Activated naive CD4-positive, alpha-beta T cell treated with anti-CD3 and anti-CD28 coated beads for 36 hours (primary cell): ENCODE measurements at regions of chr1 and their contacts with region 1.

Region 1: DNA sequence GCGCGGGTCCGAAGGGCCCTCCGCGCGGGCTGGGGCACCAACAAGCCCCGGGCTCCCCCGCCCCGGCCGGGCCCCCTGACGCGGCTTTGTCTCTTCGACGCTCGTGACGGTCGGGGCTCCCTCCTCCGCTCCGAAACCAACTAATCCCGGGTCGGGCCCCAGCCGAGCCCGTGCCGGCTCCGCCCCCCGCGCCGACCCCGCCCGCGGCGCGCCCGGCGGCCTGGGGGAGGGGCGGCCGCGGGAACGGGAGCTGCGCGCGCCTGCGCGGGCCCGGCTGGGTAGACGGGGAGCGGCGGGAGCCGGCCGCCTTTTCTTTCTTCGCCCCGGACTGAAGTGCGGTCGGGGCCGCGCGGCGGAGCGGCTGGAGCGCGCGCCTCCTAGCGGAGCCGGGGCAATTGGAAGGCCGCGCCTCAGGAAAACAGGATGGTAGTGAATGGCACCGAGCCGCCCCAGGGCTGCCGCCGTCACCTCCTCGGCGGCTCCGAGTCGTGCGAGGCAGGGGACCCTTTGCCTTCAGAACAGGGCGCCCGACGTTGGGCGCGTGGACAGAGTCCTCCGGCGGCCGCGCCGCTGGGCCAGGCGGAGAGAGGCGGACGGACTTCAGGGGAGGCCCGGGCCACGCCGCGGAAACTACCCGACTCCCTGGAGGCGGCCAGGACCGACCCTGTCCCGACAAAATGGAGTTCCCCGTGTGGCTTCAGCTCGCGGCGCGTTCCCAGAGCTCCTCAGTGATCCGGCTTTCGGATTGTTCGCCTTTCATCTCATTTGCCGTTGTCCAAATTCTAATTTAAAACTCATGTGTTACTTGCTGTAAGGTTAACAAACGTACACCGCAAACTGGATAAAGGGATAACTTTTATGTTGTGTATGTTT is at the start of gene TP53BP2:
- DNase-seq: peak; percentile 85
- H3K4me3 Mint-ChIP-seq: peak within 1 kb of the TSS; percentile 93
- H3K27ac Mint-ChIP-seq: peak within 1 kb of the TSS; percentile 97
- H3K4me1 Mint-ChIP-seq: peaks cover 41% of the 10 kb centered on the region
- H3K27me3 Mint-ChIP-seq: no peaks in the 10 kb centered on the region
- total RNA-seq, gene TP53BP2: 40.8 to 44.2 TPM

Region 2: GRCh38 chr1:221994274-221994698 is 1851.8 kb before region 1 on chr1:
- CTCF ChIA-PET with region 1: no interaction called
- intact Hi-C with region 1: loop called (anchors 10 kb)
- DNase-seq: peak; percentile 55
- H3K4me3 Mint-ChIP-seq: no peak overlapping the region
- H3K27ac Mint-ChIP-seq: peak overlapping the region; percentile 94
- H3K4me1 Mint-ChIP-seq: peaks cover 33% of the 10 kb centered on the region
- H3K27me3 Mint-ChIP-seq: no peaks in the 10 kb centered on the region

Region 3: GRCh38 chr1:223712194-223712849 is 133.7 kb before region 1 on chr1 and contains the start of gene CAPN2:
- CTCF ChIA-PET with region 1: no interaction called
- intact Hi-C with region 1: loop called (anchors 2 kb)
- DNase-seq: peak; percentile 65
- H3K4me3 Mint-ChIP-seq: peak within 1 kb of the TSS; percentile 75
- H3K27ac Mint-ChIP-seq: peak within 1 kb of the TSS; percentile 41
- H3K4me1 Mint-ChIP-seq: peaks cover 52% of the 10 kb centered on the region
- H3K27me3 Mint-ChIP-seq: no peaks in the 10 kb centered on the region
- total RNA-seq, gene CAPN2: 17.0 to 19.5 TPM

Region 4: GRCh38 chr1:223776075-223776814 is 69.8 kb before region 1 on chr1:
- CTCF ChIA-PET with region 1: interaction called, 4 read pairs
- intact Hi-C with region 1: loop called (anchors 1 kb)
- DNase-seq: peak; percentile 83
- H3K4me3 Mint-ChIP-seq: peak overlapping the region; percentile 10
- H3K27ac Mint-ChIP-seq: peak overlapping the region; percentile 86
- H3K4me1 Mint-ChIP-seq: peaks cover 41% of the 10 kb centered on the region
- H3K27me3 Mint-ChIP-seq: no peaks in the 10 kb centered on the region

Region 5: DNA sequence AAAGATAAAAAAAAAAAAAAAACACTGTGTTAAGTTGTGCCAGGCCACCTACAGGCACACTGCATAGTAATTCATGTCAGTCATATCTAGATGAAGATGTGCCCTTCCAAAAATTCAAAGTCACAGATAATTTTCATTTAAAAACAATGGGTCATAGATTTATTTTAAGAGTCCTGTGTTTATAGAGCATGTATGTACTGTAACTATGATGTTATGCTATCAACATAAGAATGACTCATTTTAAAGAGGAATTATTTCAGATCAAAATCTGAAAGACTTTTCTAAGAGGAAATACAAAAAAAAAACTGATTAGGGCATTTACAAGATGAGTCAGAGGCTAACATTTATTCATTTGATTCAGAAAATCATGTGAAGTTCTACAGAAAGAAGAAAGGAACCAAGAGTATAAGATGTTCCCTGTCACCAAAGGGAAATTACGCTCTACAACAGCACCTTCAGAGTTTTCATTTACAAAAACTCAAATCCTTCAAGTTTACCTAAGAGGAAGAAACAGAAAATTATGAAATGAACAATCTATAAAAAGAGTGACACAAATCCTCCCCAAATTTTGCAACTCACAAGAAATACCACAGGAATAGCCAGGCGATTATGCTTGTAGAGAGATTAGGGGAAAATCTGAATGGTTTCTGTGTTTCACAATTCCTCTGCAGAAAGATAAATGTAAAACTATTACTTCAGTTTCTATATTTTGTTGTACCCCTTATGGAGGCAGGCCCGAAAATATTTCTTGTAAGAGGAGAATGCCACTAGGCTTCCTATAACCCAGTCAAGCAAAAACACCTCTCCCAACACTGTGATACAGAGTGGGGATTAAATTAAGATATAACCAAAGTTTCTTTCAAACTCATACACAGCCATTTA is 14.1 kb before region 1 on chr1:
- CTCF ChIA-PET with region 1: interaction called, 10 read pairs
- intact Hi-C with region 1: loop called (anchors 1 kb)
- DNase-seq: peak; percentile 14
- H3K4me3 Mint-ChIP-seq: peak overlapping the region; percentile 28
- H3K27ac Mint-ChIP-seq: peak overlapping the region; percentile 93
- H3K4me1 Mint-ChIP-seq: peaks cover 28% of the 10 kb centered on the region
- H3K27me3 Mint-ChIP-seq: no peaks in the 10 kb centered on the region

Region 6: DNA sequence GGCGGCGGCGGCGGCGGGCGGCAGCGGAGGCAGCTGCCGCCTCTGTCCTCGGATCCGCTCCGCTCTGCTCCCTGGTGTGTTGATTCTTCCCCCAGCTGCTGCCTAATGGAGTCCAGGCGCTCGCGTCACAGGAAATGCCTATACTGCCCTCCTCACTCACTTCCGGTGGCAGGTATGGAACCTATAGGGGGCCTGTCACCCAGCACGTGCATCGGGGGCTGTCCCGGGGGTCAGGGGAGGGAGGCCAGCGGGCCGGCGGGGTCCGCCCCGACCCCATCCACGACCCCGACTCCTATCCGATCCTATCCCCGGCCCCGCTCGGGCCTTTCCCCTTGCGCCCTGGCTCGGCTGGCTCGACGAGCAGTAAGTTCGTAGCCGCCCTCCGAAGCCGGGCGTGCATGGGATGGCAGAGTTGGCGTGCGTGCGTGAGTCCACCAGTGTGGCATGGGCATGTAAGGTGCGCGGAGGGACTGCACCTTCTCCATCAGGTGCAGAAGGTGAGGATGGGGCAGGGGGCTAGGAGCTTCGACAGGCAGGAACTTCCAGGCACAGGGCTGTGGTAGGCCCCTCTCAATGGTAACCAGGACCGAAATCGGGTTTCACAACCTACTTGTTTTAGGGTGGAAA is 588.8 kb after region 1 on chr1 and contains the start of gene WDR26:
- CTCF ChIA-PET with region 1: no interaction called
- intact Hi-C with region 1: loop called (anchors 2 kb)
- DNase-seq: peak; percentile 91
- H3K4me3 Mint-ChIP-seq: peak within 1 kb of the TSS; percentile 95
- H3K27ac Mint-ChIP-seq: peak within 1 kb of the TSS; percentile 95
- H3K4me1 Mint-ChIP-seq: peaks cover 46% of the 10 kb centered on the region
- H3K27me3 Mint-ChIP-seq: no peaks in the 10 kb centered on the region
- total RNA-seq, gene WDR26: 44.3 to 45.4 TPM